CD4-positive, alpha-beta memory T cell (primary cell): ENCODE measurements at regions of chr17 and their contacts with region 1.

Region 1: GRCh38 chr17:73231841-73232586 is 29.7 kb downstream of the CPSF4L start:
- DNase-seq: peak; percentile 95 to 97 (median 96)
- H3K4me3 ChIP-seq: peak overlapping the region; percentile 63 to 77
- H3K4me3 Mint-ChIP-seq: peak overlapping the region; percentile 91 to 96 (median 94)
- H3K27ac ChIP-seq: peak overlapping the region; percentile 73
- H3K27ac Mint-ChIP-seq: peak overlapping the region; percentile 91 to 99 (median 97)
- H3K4me1 ChIP-seq: peaks cover 58% of the 10 kb centered on the region
- H3K4me1 Mint-ChIP-seq: peaks cover 44 to 81% (median 62%) of the 10 kb centered on the region in 4 donors
- H3K27me3 ChIP-seq: no peaks in the 10 kb centered on the region
- H3K27me3 Mint-ChIP-seq: no peaks in the 10 kb centered on the region

Region 2: DNA sequence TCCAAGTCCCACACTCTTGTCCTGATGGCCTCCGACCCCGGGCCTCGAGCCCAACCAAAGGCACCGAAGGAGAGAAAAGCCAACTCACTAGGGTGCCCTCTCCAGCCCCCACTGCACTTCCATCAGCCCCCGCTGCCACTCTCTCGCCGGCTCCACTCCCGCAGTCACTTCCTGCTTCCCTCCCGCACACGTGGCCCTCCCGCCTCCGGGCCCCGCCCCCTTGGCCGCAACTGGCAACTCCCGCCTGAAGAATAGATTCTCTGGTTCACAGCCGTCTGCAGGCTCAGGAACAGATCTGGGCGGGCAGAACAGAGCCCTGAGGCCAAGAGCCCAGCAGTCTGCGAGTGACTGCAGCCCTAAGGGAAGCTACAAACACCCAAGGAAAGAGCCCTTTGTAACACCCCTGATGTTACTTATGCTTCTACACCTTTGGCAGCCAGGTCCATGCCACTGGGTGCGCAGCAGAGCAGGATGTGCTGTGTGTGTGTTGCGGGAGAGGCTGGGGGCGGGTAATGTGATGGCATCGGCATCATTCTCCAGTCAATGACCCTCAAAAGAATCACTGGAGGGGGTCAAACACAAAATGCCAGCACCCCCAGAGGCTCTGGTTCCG is 139.4 kb before region 1 on chr17 and contains the start of gene SLC39A11:
- CTCF ChIA-PET with region 1: no interaction called
- POLR2A ChIA-PET with region 1: interaction called, 3 read pairs
- intact Hi-C with region 1: loop called (anchors 1 kb)
- DNase-seq: peak; percentile 87 to 93 (median 89)
- H3K4me3 ChIP-seq: peak within 1 kb of the TSS; percentile 26 to 55
- H3K4me3 Mint-ChIP-seq: peak within 1 kb of the TSS; percentile 90 to 99 (median 97)
- H3K27ac ChIP-seq: peak within 1 kb of the TSS; percentile 58
- H3K27ac Mint-ChIP-seq: peak within 1 kb of the TSS; percentile 62 to 98 (median 96)
- H3K4me1 ChIP-seq: peaks cover 27% of the 10 kb centered on the region
- H3K4me1 Mint-ChIP-seq: peaks cover 17 to 41% (median 29%) of the 10 kb centered on the region in 4 donors
- H3K27me3 ChIP-seq: no peaks in the 10 kb centered on the region
- H3K27me3 Mint-ChIP-seq: peaks cover 0 to 3% of the 10 kb centered on the region in 2 donors
- total RNA-seq, gene SLC39A11: 20.8 to 23.7 TPM

Region 3: DNA sequence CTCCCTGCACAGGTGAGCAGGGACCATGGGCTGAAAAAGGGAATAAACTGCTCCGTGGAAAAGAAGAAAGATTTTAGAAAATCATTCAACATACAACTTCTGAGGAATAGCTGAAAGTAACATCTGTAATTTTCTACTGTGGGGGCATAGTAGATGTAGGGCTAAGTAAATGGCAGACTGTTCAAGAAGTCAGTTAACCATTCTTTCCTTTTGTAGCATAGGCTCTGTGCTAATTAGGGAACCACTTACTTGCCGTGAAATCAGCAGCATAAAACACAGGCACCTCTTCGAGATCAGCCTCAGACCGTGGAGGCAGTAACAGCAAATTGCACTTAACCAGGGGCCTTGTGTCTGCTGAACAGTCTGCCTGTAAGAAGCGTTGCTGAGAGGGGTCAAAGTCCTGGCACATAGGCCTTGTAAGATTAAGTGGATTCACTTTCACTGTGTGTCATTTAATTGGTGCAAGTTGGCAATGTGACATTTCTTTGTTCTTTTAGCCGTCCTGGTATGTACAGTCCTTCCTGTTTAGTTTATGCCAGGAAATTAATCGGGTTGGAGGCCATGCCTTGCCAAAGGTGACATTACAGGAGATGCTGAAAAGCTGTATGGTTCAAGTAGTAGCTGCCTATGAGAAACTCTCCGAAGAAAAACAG is 28.8 kb before region 1 on chr17:
- CTCF ChIA-PET with region 1: interaction called, 6 read pairs
- POLR2A ChIA-PET with region 1: interaction called, 13 read pairs
- intact Hi-C with region 1: no loop called
- DNase-seq: peak in 2 of 5 donors; percentile 27 to 30
- H3K4me3 ChIP-seq: no peak overlapping the region
- H3K4me3 Mint-ChIP-seq: peak overlapping the region in 5 of 8 donors; percentile 43 to 67 (median 49)
- H3K27ac ChIP-seq: peak overlapping the region; percentile 0
- H3K27ac Mint-ChIP-seq: peak overlapping the region; percentile 76 to 93 (median 87)
- H3K4me1 ChIP-seq: peaks cover 16% of the 10 kb centered on the region
- H3K4me1 Mint-ChIP-seq: peaks cover 17 to 38% (median 30%) of the 10 kb centered on the region in 4 donors
- H3K27me3 ChIP-seq: no peaks in the 10 kb centered on the region
- H3K27me3 Mint-ChIP-seq: no peaks in the 10 kb centered on the region

Region 4: DNA sequence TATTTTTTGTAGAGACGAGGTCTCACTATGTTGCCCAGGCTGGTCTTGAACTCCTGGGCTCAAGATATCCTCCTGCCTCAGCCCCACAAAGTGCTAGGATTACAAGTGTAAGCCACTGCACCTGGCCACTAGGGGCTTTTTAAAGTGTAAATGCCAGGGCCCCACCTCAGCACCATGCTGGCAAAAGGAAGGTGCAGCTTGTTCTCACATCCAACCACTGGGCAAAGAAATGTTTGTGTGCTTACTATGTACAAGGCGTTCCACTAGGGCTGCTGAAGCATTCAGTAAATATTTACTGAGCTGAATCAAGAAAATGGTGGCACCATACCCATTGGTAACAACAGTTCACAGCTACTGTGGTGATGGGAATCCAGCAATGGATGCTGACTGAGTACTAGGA is 16.6 kb before region 1 on chr17:
- CTCF ChIA-PET with region 1: interaction called, 14 read pairs
- POLR2A ChIA-PET with region 1: interaction called, 18 read pairs
- intact Hi-C with region 1: no loop called
- DNase-seq: no peak
- H3K4me3 ChIP-seq: no peak overlapping the region
- H3K4me3 Mint-ChIP-seq: no peak overlapping the region
- H3K27ac ChIP-seq: no peak overlapping the region
- H3K27ac Mint-ChIP-seq: peak overlapping the region; percentile 20 to 87 (median 67)
- H3K4me1 ChIP-seq: peaks cover 21% of the 10 kb centered on the region
- H3K4me1 Mint-ChIP-seq: peaks cover 23 to 50% (median 37%) of the 10 kb centered on the region in 4 donors
- H3K27me3 ChIP-seq: no peaks in the 10 kb centered on the region
- H3K27me3 Mint-ChIP-seq: no peaks in the 10 kb centered on the region

Region 5: DNA sequence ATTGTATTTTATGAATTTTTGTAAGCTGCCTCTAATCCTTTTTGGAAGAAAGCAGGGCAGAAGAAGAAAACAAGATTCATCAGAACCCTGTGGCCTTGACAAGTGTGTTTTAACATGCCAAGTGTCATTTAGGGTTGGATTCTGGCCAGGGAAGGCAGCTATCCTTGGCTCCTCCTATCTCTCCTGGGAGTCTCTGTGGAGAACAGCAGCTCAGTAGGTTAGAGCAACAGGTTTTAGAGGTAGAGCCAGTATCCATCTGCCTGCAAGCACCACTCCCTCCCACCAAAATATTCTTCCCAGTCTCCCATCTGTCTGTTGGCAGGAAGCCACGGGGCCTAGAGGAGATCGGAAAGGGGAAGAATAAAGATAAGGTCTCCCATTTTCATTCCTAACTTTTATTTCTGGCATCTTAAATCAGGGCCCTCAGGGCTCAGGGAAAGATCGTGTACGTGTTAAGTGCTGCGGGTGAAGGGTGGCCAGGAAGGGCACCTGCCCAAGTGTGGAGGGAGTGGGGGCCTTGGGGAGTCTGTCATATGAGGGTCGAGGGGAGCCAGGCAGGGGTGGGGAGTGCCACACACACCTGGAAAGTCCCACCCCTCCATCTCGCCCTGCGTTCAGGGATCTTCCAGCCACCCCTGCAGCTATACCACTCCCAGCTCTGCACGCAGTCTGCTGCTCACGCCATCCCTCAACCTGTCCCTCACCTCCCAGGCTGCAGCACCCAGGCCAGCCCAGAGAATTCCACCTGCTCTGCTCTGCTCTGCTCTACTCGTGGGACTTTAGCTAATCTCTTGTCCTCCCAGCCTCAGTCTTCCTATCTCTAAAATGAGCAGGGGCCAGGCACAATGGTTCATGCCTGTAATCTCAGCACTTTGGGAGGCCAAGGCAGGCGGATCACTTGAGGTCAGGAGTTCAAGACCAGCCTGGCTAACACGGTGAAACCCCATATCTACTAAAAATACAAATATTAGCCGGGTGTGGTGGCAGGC is 46.7 kb after region 1 on chr17:
- CTCF ChIA-PET with region 1: no interaction called
- POLR2A ChIA-PET with region 1: no interaction called
- intact Hi-C with region 1: no loop called
- DNase-seq: no peak
- H3K4me3 ChIP-seq: no peak overlapping the region
- H3K4me3 Mint-ChIP-seq: no peak overlapping the region
- H3K27ac ChIP-seq: no peak overlapping the region
- H3K27ac Mint-ChIP-seq: no peak overlapping the region
- H3K4me1 ChIP-seq: no peaks in the 10 kb centered on the region
- H3K4me1 Mint-ChIP-seq: no peaks in the 10 kb centered on the region
- H3K27me3 ChIP-seq: no peaks in the 10 kb centered on the region
- H3K27me3 Mint-ChIP-seq: peaks cover 4 to 9% of the 10 kb centered on the region in 2 donors

Region 6: DNA sequence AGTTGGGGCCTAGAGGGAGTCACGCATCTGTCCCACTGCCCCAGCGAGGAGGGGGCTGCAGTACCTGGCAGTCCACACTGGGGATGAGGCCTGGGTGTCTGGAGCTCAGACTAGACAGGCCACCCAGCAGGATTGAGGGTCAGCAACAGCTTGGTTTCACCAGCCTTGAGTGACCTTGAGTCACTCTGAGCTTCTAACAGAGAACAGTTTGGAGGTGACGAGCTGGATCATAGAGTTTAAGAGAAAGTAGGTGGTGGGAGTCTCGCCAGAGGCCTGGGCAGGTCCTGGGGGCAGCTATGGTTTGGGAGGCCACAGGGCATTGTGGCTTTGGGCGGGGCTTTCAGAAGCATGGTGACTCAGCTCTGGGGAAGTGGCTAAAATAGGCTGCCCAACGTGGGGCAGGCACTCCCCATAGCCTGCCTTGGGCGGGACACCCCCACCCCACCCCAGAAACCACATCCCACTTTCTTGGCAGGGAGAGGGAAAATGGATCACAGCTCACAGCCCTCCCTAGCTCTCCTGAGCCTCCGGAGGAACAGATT is 59.3 kb after region 1 on chr17:
- CTCF ChIA-PET with region 1: no interaction called
- POLR2A ChIA-PET with region 1: no interaction called
- intact Hi-C with region 1: no loop called
- DNase-seq: no peak
- H3K4me3 ChIP-seq: no peak overlapping the region
- H3K4me3 Mint-ChIP-seq: peak overlapping the region in 2 of 8 donors; percentile 10 to 31
- H3K27ac ChIP-seq: no peak overlapping the region
- H3K27ac Mint-ChIP-seq: peak overlapping the region in 2 of 7 donors; percentile 27 to 37
- H3K4me1 ChIP-seq: peaks cover 10% of the 10 kb centered on the region
- H3K4me1 Mint-ChIP-seq: peaks cover 7 to 16% (median 11%) of the 10 kb centered on the region in 4 donors
- H3K27me3 ChIP-seq: no peaks in the 10 kb centered on the region
- H3K27me3 Mint-ChIP-seq: peaks cover 0 to under 1% of the 10 kb centered on the region in 2 donors

Region 7: DNA sequence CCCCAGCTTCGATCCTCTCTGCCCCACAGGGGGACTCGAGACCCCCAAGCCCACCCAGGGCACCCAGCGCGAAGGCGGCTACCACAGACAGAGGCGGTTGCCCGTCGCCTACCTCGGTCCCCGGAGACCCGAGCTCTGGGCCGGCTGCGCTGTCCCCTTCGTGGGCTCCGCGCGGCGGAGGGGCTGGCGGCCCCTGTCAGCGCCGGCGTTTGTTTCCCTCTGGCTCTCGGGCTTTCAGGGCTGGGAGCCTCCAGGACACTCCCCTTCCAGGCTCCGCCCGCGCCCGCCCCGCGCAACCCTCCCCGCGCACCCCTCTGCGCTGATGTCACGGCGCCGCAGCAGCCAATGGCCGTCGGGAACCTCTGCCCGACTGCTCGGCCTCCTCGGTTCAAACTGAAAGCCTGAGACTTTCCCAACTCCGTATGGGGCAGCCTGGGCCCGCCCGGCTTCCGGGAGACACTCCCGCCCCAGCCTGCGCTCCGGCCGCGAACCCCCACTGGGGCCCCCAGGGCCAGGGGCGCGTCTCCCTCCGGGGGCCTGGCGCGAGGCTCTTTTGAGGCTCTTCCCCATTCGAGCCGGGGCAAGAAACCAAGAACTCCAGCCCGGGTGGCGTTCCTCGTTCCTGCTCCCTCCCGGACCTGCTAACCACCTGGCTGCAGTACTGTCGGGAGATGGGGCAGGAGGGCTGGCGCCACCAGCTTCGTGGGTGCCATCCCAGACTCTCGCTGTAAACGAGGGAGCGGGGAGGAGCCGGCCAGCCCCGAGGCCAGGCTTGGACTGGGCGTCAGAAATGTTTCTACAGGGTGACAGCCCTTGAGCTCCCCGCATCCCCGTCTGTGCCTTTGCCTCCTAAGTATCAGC is 80.0 kb after region 1 on chr17 and contains the start of gene CDC42EP4:
- CTCF ChIA-PET with region 1: interaction called, 3 read pairs
- POLR2A ChIA-PET with region 1: interaction called, 6 read pairs
- intact Hi-C with region 1: loop called (anchors 1 kb)
- DNase-seq: peak; percentile 81 to 88 (median 81)
- H3K4me3 ChIP-seq: peak within 1 kb of the TSS; percentile 57 to 80
- H3K4me3 Mint-ChIP-seq: peak within 1 kb of the TSS; percentile 85 to 92 (median 88)
- H3K27ac ChIP-seq: peak within 1 kb of the TSS; percentile 63
- H3K27ac Mint-ChIP-seq: peak within 1 kb of the TSS; percentile 73 to 88 (median 82)
- H3K4me1 ChIP-seq: peaks cover 15% of the 10 kb centered on the region
- H3K4me1 Mint-ChIP-seq: peaks cover 6 to 19% (median 13%) of the 10 kb centered on the region in 4 donors
- H3K27me3 ChIP-seq: no peaks in the 10 kb centered on the region
- H3K27me3 Mint-ChIP-seq: no peaks in the 10 kb centered on the region
- total RNA-seq, gene CDC42EP4: 1.1 to 1.4 TPM